Panc1 (cell line): ENCODE measurements at regions of chr10 and their contacts with region 1.

Region 1: GRCh38 chr10:64041185-64041988 is 520.2 kb downstream of the REEP3 start:
- DNase-seq: peak; percentile 75
- ATAC-seq: peak; percentile 97
- H3K4me3 ChIP-seq: peak overlapping the region; percentile 24 to 54
- H3K27ac ChIP-seq: no peak overlapping the region
- H3K4me1 ChIP-seq: no peaks in the 10 kb centered on the region
- H3K27me3 ChIP-seq: no peaks in the 10 kb centered on the region; the same call in 1 of the 2 replicates
- CTCF ChIP-seq: peak; percentile 100

Region 2: GRCh38 chr10:63711867-63712716 is 329.3 kb before region 1 on chr10:
- CTCF ChIA-PET with region 1: no interaction called
- POLR2A ChIA-PET with region 1: no interaction called
- in situ Hi-C with region 1: no loop called
- intact Hi-C with region 1: no loop called
- DNase-seq: peak; percentile 90
- ATAC-seq: peak; percentile 91
- H3K4me3 ChIP-seq: no peak overlapping the region
- H3K27ac ChIP-seq: peak overlapping the region; percentile 82
- H3K4me1 ChIP-seq: peaks cover 64% of the 10 kb centered on the region
- H3K27me3 ChIP-seq: no peaks in the 10 kb centered on the region
- CTCF ChIP-seq: no peak

Region 3: GRCh38 chr10:63866075-63866746 is 175.2 kb before region 1 on chr10:
- CTCF ChIA-PET with region 1: no interaction called
- POLR2A ChIA-PET with region 1: no interaction called
- in situ Hi-C with region 1: no loop called
- intact Hi-C with region 1: loop called (anchors 5 kb)
- DNase-seq: peak; percentile 38
- ATAC-seq: peak; percentile 92
- H3K4me3 ChIP-seq: peak overlapping the region; percentile 3 to 23; a peak in 2 of 4 replicates
- H3K27ac ChIP-seq: no peak overlapping the region
- H3K4me1 ChIP-seq: peaks cover 10% of the 10 kb centered on the region
- H3K27me3 ChIP-seq: peaks cover 20% of the 10 kb centered on the region
- CTCF ChIP-seq: peak; percentile 96

Region 4: DNA sequence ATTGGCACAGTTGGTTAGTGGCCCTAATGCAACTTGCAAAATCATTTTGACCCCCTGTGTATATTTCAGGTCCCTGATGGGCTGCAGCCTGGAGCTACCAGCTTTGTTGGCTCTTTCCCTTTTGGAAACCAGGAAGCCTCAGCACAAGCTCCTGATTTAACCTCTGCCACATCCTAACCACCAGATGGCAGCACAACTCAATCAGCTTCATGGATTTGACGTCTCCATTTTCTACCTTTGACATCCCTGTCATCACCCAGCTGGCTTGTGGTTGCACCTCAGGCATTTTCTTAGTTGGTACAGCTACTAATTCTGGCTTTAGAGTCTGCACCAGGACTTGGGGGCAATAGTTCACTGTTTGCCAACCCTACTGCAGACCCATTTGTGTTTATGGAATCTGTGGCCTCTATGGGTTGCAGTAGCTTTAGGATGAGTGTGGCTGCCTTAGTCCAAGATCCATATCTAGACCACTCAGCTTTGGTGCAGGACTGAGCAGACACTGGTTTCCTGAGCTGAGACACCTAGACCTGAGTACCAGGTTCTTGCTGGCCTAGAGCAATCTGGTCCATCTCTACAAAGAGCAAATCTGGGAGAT is 64.0 kb before region 1 on chr10:
- CTCF ChIA-PET with region 1: no interaction called
- POLR2A ChIA-PET with region 1: no interaction called
- in situ Hi-C with region 1: no loop called
- intact Hi-C with region 1: no loop called
- DNase-seq: peak; percentile 2
- ATAC-seq: peak; percentile 59
- H3K4me3 ChIP-seq: no peak overlapping the region
- H3K27ac ChIP-seq: no peak overlapping the region
- H3K4me1 ChIP-seq: no peaks in the 10 kb centered on the region
- H3K27me3 ChIP-seq: no peaks in the 10 kb centered on the region
- CTCF ChIP-seq: peak; percentile 82